ENCODE measurements at regions of chr12 and their contacts with region 1.

Region 1: GRCh38 chr12:50055831-50056638 is 1.4 kb upstream of the ASIC1 start:
- DNase-seq: peak; percentile 24 to 76 (median 61)
- ATAC-seq: peak; percentile 56
- H3K4me3 ChIP-seq: no peak overlapping the region
- H3K4me3 Mint-ChIP-seq: peak overlapping the region; percentile 90
- H3K27ac ChIP-seq: no peak overlapping the region
- H3K27ac Mint-ChIP-seq: no peak overlapping the region
- H3K4me1 ChIP-seq: peaks cover 50% of the 10 kb centered on the region
- H3K4me1 Mint-ChIP-seq: peaks cover 42% of the 10 kb centered on the region
- H3K27me3 ChIP-seq: peaks cover 9 to 25% of the 10 kb centered on the region in 2 experiments
- H3K27me3 Mint-ChIP-seq: peaks cover 34% of the 10 kb centered on the region
- CTCF ChIP-seq: peak; percentile 95

Region 2: DNA sequence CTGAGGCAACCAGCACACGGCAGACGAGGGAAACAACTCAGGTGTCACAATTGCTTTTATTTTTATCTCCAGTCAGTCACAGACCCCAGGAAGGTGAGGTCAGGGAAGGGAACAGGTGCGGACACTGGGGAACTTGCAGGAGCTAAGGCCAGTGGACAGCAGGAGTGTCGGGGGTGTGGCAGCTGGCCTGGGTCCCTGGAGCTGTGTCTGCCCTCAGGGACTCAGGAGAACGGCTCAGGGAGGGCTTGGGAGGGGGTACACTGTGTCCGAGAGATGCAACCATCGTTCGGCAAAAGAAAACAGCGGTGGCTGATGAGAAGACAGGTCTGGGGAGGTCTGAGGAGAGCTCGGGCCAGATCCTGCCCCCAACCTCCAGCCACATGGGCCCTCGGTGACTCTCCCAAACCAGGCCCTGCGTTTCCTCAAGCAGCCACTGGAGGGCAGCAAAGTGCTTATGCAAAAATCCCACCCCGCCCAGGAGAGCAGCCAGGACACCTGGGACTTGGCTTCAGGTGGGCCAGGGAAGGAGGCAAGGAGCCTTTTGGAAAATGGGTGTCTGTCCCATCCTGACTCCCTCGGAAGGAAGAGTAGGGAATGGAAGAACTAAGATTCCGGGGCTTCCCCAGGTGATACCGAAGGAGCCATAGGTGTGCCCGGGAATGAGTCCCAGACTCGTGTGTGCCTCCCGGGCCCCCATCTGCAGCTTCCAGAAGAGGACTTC is 189.0 kb before region 1 on chr12:
- CTCF ChIA-PET with region 1: interaction called, 3 read pairs
- POLR2A ChIA-PET with region 1: no interaction called
- intact Hi-C with region 1: loop called (anchors 5 to 10 kb)
- DNase-seq: peak; percentile 54 to 83 (median 74)
- ATAC-seq: peak; percentile 89
- H3K4me3 ChIP-seq: no peak overlapping the region
- H3K4me3 Mint-ChIP-seq: no peak overlapping the region
- H3K27ac ChIP-seq: no peak overlapping the region
- H3K27ac Mint-ChIP-seq: no peak overlapping the region
- H3K4me1 ChIP-seq: no peaks in the 10 kb centered on the region
- H3K4me1 Mint-ChIP-seq: no peaks in the 10 kb centered on the region
- H3K27me3 ChIP-seq: no peaks in the 10 kb centered on the region
- H3K27me3 Mint-ChIP-seq: no peaks in the 10 kb centered on the region
- CTCF ChIP-seq: peak; percentile 89

Region 3: GRCh38 chr12:50003595-50003994 is 52.4 kb before region 1 on chr12:
- CTCF ChIA-PET with region 1: no interaction called
- POLR2A ChIA-PET with region 1: no interaction called
- intact Hi-C with region 1: no loop called
- DNase-seq: no peak
- ATAC-seq: no peak
- H3K4me3 ChIP-seq: no peak overlapping the region
- H3K4me3 Mint-ChIP-seq: no peak overlapping the region
- H3K27ac ChIP-seq: no peak overlapping the region
- H3K27ac Mint-ChIP-seq: no peak overlapping the region
- H3K4me1 ChIP-seq: no peaks in the 10 kb centered on the region
- H3K4me1 Mint-ChIP-seq: no peaks in the 10 kb centered on the region
- H3K27me3 ChIP-seq: no peaks in the 10 kb centered on the region
- H3K27me3 Mint-ChIP-seq: no peaks in the 10 kb centered on the region
- CTCF ChIP-seq: no peak

Region 4: DNA sequence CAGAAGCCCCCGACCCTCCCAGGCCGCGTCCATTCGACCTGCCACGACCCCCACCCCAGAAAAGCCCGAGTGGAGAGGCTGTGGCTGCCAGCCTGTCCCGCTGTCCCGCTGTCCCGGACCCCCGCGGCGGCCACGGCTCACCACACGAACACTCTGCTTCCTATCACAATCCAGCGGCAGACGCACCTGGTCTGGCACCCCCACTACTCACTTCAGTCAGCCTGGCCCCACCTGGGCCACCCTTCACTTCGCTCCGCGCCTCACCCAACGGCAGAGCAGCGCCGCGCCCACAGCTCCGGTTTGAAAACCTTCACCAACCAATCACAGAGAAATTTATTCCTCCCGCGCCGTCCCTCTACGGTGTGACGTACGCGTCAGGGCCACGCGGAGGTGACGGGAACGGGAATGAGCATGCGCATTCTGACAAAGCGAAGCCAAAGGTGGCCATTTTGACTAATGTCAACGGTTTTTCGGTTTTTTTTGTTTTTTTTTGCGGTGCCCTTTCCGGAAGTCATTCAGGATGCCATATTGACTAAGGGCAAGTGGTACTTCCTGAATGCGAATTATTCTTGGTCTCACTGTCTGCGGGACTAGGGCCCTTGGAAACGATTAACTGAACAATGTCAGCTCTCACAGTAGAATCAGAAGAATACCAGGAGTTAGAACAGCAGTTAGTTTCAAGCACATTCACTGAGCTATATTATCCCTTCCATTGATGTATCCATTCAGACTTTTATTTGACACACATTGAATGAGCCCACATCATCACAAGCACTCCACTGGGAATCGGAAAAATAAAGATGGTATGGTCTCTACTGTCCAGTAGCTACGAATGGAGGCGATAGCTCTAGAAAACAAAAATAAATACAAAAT is 30.6 kb before region 1 on chr12 and contains the start of gene RACGAP1:
- CTCF ChIA-PET with region 1: interaction called, 3 read pairs
- POLR2A ChIA-PET with region 1: interaction called, 5 read pairs
- intact Hi-C with region 1: loop called in 1 of 2 experiments (anchors 1 kb)
- DNase-seq: peak; percentile 88 to 99 (median 94)
- ATAC-seq: peak; percentile 97
- H3K4me3 ChIP-seq: peak within 1 kb of the TSS; percentile 62 to 78
- H3K4me3 Mint-ChIP-seq: peak within 1 kb of the TSS; percentile 98
- H3K27ac ChIP-seq: peak within 1 kb of the TSS; percentile 38 to 63
- H3K27ac Mint-ChIP-seq: peak within 1 kb of the TSS; percentile 86
- H3K4me1 ChIP-seq: no peaks in the 10 kb centered on the region
- H3K4me1 Mint-ChIP-seq: peaks cover 16% of the 10 kb centered on the region
- H3K27me3 ChIP-seq: no peaks in the 10 kb centered on the region
- H3K27me3 Mint-ChIP-seq: no peaks in the 10 kb centered on the region
- CTCF ChIP-seq: no peak
- total RNA-seq, gene RACGAP1: 2.2 to 2.8 TPM

Region 5: GRCh38 chr12:50043854-50044253 is 12.2 kb before region 1 on chr12:
- CTCF ChIA-PET with region 1: interaction called, 191 read pairs
- POLR2A ChIA-PET with region 1: no interaction called
- intact Hi-C with region 1: loop called (anchors 1 kb)
- DNase-seq: no peak
- ATAC-seq: no peak
- H3K4me3 ChIP-seq: no peak overlapping the region
- H3K4me3 Mint-ChIP-seq: no peak overlapping the region
- H3K27ac ChIP-seq: no peak overlapping the region
- H3K27ac Mint-ChIP-seq: no peak overlapping the region
- H3K4me1 ChIP-seq: no peaks in the 10 kb centered on the region
- H3K4me1 Mint-ChIP-seq: no peaks in the 10 kb centered on the region
- H3K27me3 ChIP-seq: peaks cover 0 to under 1% of the 10 kb centered on the region in 2 experiments
- H3K27me3 Mint-ChIP-seq: peaks cover 14% of the 10 kb centered on the region
- CTCF ChIP-seq: no peak

Region 6: GRCh38 chr12:50074936-50075807 is 19.1 kb after region 1 on chr12:
- CTCF ChIA-PET with region 1: interaction called, 43 read pairs
- POLR2A ChIA-PET with region 1: interaction called, 3 read pairs
- intact Hi-C with region 1: loop called in 1 of 2 experiments (anchors 2 kb)
- DNase-seq: peak; percentile 71 to 89 (median 80)
- ATAC-seq: peak; percentile 98
- H3K4me3 ChIP-seq: no peak overlapping the region
- H3K4me3 Mint-ChIP-seq: no peak overlapping the region
- H3K27ac ChIP-seq: no peak overlapping the region
- H3K27ac Mint-ChIP-seq: no peak overlapping the region
- H3K4me1 ChIP-seq: peaks cover 6% of the 10 kb centered on the region
- H3K4me1 Mint-ChIP-seq: peaks cover 8% of the 10 kb centered on the region
- H3K27me3 ChIP-seq: no peaks in the 10 kb centered on the region
- H3K27me3 Mint-ChIP-seq: no peaks in the 10 kb centered on the region
- CTCF ChIP-seq: peak; percentile 88